ENCODE measurements at regions of chr17 and their contacts with region 1.

Region 1: DNA sequence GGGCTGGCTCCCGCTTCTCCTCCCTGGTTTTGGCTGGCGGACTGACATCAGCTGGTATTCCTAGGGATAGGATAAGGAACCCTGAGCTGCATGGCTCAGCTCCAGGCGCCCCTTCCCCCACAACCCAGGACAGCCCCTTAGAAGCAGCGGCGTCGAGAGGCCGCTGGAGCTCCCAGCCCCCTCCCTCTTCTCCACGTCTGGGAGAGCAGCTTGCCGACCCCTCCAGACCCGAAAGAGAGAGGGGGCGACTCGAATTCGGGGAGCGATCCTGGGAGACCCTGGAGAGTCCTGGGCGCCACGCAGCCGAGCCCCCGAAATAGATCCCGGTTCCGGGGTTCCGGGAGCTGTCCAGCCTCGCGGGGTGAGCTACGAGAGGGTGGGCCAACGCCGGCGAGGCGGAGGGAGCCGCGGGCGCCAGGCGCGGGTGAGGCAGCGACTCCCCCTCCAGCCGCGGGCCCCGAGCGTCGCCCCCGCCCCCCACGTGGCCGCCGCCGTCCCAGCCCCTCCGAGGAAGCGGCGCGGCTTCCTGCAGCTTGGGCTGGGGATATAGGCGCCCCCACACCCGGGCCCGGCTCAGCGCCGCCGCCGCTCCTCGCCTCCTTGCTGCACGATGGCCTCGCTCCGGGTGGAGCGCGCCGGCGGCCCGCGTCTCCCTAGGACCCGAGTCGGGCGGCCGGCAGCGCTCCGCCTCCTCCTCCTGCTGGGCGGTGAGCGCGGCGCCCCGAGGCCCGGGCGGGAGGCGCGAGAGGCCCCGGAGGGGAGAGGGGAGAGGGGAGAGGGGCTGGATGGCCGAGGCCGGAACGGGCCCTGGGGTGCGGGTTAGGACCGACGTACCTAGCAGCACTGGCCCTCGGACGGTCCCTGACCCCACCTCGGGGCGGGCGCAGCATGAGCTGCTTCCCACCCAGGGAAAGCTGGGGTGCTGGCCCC is at the start of gene RAMP2:
- DNase-seq: no peak
- ATAC-seq: no peak
- H3K4me3 ChIP-seq: no peak within 1 kb of the TSS
- H3K27ac ChIP-seq: no peak within 1 kb of the TSS
- H3K4me1 ChIP-seq: peaks cover 8 to 21% of the 10 kb centered on the region in 2 experiments; a peak in 3 of 5 replicates
- H3K27me3 ChIP-seq: no peaks in the 10 kb centered on the region
- CTCF ChIP-seq: no peak
- EP300 ChIP-seq: no peak
- POLR2A ChIP-seq: no peak
- RAD21 ChIP-seq: no peak
- polyA plus RNA-seq, gene RAMP2: not detected

Region 2: GRCh38 chr17:42695500-42695899 is 65.4 kb before region 1 on chr17:
- CTCF ChIA-PET with region 1: no interaction called
- POLR2A ChIA-PET with region 1: no interaction called
- in situ Hi-C with region 1: no loop called
- intact Hi-C with region 1: no loop called
- DNase-seq: no peak
- ATAC-seq: no peak
- H3K4me3 ChIP-seq: no peak overlapping the region
- H3K27ac ChIP-seq: no peak overlapping the region
- H3K4me1 ChIP-seq: peaks cover 25 to 41% of the 10 kb centered on the region in 2 experiments
- H3K27me3 ChIP-seq: no peaks in the 10 kb centered on the region
- CTCF ChIP-seq: no peak
- EP300 ChIP-seq: no peak
- POLR2A ChIP-seq: no peak
- RAD21 ChIP-seq: no peak

Region 3: DNA sequence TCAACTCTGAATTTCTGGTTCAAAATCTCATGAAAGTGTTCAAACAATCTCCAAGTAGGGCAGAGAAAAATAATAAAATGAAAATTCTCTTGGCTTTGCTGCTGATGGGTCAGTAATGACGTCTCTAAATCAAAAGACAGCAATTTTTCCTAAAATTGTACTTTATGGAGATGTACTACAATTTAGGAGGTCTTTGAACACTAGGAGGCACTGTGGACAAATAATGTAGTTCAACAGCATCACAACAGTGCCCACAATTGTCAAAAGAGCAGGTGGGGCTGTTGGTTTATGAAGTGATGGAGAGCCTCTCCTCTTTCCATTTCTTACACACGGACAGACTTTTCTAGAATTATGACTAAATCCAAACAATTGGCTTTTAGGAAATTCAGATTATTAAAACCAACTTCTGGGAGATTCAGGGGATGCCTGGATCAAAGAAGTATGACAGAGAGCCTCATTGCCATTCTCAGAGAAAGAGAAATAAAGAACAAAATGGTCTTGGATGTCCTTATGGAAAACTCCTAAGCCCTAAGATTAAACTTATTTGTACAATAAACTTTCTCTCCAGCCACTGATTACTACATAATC is 39.8 kb before region 1 on chr17:
- CTCF ChIA-PET with region 1: interaction called, 34 read pairs
- POLR2A ChIA-PET with region 1: interaction called, 4 read pairs
- in situ Hi-C with region 1: no loop called
- intact Hi-C with region 1: loop called (anchors 1 kb)
- DNase-seq: peak; percentile 60 to 81 (median 62)
- ATAC-seq: peak; percentile 90
- H3K4me3 ChIP-seq: no peak overlapping the region
- H3K27ac ChIP-seq: no peak overlapping the region
- H3K4me1 ChIP-seq: no peaks in the 10 kb centered on the region
- H3K27me3 ChIP-seq: no peaks in the 10 kb centered on the region
- CTCF ChIP-seq: peak; percentile 77 to 90 (median 81)
- EP300 ChIP-seq: peak; percentile 14; the same call in 1 of the 2 replicates
- POLR2A ChIP-seq: no peak
- RAD21 ChIP-seq: peak; percentile 88 to 96

Region 4: DNA sequence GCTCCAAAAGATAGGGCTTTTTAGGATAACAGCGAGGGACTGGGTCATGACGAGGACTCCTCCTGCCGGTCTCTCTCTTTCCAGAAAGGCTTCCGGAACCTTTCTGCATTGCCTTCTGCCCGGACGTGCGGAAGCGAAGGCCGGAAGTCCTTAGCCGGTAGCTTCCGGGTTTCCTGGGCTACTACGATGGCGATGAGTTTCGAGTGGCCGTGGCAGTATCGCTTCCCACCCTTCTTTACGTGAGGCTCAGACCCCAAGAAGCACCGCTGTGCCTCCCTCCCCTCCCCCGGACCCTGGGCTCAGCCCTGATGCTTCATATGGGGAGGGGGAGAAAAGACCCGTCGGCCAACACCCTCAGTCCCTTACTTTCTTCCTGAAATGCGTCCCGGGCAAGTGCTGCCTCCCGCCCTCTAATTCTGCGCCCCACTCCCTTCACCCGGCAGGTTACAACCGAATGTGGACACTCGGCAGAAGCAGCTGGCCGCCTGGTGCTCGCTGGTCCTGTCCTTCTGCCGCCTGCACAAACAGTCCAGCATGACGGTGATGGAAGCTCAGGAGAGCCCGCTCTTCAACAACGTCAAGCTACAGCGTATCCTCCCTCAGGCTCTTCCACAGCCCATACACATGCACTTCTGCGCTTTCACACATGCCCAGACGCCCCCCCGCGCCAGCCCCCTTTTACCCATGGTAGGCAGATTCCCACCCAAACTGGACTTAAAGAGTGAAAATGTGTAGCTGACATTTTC is 12.5 kb after region 1 on chr17 and contains the start of gene VPS25:
- CTCF ChIA-PET with region 1: no interaction called
- POLR2A ChIA-PET with region 1: interaction called, 12 read pairs
- in situ Hi-C with region 1: no loop called
- intact Hi-C with region 1: no loop called
- DNase-seq: peak; percentile 83 to 92 (median 86)
- ATAC-seq: peak; percentile 86
- H3K4me3 ChIP-seq: peak within 1 kb of the TSS; percentile 84
- H3K27ac ChIP-seq: peak within 1 kb of the TSS; percentile 85
- H3K4me1 ChIP-seq: peaks cover 27 to 40% of the 10 kb centered on the region in 2 experiments
- H3K27me3 ChIP-seq: no peaks in the 10 kb centered on the region
- CTCF ChIP-seq: peak; percentile 20 to 36 (median 33); a peak in 2 of 6 replicates
- EP300 ChIP-seq: peak; percentile 22; the same call in 1 of the 2 replicates
- POLR2A ChIP-seq: peak; percentile 95
- RAD21 ChIP-seq: peak; percentile 11 to 43; a peak in 2 of 4 replicates
- polyA plus RNA-seq, gene VPS25: 292 to 352 TPM